ENCODE measurements at regions of chr6 and their contacts with region 1.

Region 1: DNA sequence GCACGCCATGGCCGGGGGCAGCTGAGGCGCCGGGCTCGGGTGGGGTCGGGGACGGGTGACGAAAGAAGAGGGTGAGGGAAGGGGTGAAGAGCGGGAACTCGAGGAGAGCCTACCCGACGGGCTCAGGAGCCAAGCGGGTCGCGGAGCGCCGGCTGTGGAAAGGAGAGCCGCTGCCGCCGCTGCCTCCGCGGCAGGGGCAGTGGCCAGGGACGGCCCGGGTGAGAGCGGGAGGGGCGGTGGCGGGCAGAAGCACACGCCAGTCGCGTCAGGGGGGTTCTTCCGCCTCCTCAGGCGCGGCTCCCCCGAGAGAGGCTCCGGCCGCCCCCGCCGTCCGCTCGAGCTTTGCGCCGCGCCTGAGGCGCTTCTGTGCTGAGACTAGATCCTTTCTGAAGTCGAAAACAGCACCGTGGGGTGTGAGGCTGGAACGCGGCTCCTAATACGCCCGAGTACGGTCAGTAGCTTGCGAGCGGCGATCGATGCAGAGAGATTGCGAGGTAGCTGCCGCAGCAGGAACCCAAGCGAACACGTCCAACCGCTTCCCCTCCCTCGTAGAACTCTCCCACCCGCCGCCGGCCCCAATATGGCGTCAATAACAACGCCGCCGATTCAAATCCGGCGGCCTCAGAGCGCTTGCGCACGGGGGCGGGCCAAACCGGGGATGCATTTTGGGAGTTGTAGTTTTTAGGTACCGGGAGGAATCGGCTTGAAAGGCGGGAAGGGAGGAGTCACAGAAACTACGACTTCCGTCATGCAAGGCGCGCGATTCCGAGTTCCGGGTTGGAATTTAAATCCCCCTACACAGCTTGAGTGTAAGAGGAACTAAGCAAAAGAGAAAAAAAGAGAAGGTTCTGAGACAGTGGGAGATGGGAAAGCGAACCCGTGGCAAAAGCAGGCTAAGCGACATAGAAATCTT is at the start of gene AKIRIN2:
- DNase-seq: peak; percentile 96 to 99 (median 98)
- ATAC-seq: peak; percentile 90
- H3K4me3 ChIP-seq: peak within 1 kb of the TSS; percentile 80
- H3K4me3 Mint-ChIP-seq: peak within 1 kb of the TSS; percentile 92 to 98 (median 96)
- H3K27ac ChIP-seq: peak within 1 kb of the TSS; percentile 93
- H3K27ac Mint-ChIP-seq: peak within 1 kb of the TSS; percentile 89 to 97 (median 94)
- H3K4me1 ChIP-seq: peaks cover 6 to 13% of the 10 kb centered on the region in 2 donors
- H3K4me1 Mint-ChIP-seq: peaks cover 22 to 43% (median 40%) of the 10 kb centered on the region in 7 donors
- H3K27me3 ChIP-seq: no peaks in the 10 kb centered on the region
- H3K27me3 Mint-ChIP-seq: no peaks in the 10 kb centered on the region
- total RNA-seq, gene AKIRIN2: 36.0 to 197 (median 57.4) TPM

Region 2: GRCh38 chr6:87393022-87393622 is 308.8 kb before region 1 on chr6:
- CTCF ChIA-PET with region 1: no interaction called
- POLR2A ChIA-PET with region 1: no interaction called
- intact Hi-C with region 1: loop called in 1 of 2 experiments (anchors 5 kb)
- DNase-seq: peak in 7 of 9 donors; percentile 43 to 63 (median 62)
- ATAC-seq: peak; percentile 96
- H3K4me3 ChIP-seq: no peak overlapping the region
- H3K4me3 Mint-ChIP-seq: no peak overlapping the region
- H3K27ac ChIP-seq: no peak overlapping the region
- H3K27ac Mint-ChIP-seq: no peak overlapping the region
- H3K4me1 ChIP-seq: no peaks in the 10 kb centered on the region
- H3K4me1 Mint-ChIP-seq: peaks cover 0 to 3% (median 0%) of the 10 kb centered on the region in 7 donors
- H3K27me3 ChIP-seq: no peaks in the 10 kb centered on the region
- H3K27me3 Mint-ChIP-seq: no peaks in the 10 kb centered on the region

Region 3: GRCh38 chr6:87645080-87645479 is 56.9 kb before region 1 on chr6:
- CTCF ChIA-PET with region 1: interaction called, 3 read pairs
- POLR2A ChIA-PET with region 1: interaction called, 3 read pairs
- intact Hi-C with region 1: loop called in 1 of 2 experiments (anchors 2 kb)
- DNase-seq: peak in 2 of 9 donors; percentile 12 to 30
- ATAC-seq: peak; percentile 40
- H3K4me3 ChIP-seq: peak overlapping the region; percentile 32
- H3K4me3 Mint-ChIP-seq: peak overlapping the region; percentile 30 to 86 (median 78)
- H3K27ac ChIP-seq: no peak overlapping the region
- H3K27ac Mint-ChIP-seq: peak overlapping the region; percentile 49 to 87 (median 78)
- H3K4me1 ChIP-seq: peaks cover 0 to 8% of the 10 kb centered on the region in 2 donors
- H3K4me1 Mint-ChIP-seq: peaks cover 0 to 25% (median 19%) of the 10 kb centered on the region in 7 donors
- H3K27me3 ChIP-seq: no peaks in the 10 kb centered on the region
- H3K27me3 Mint-ChIP-seq: no peaks in the 10 kb centered on the region

Region 4: DNA sequence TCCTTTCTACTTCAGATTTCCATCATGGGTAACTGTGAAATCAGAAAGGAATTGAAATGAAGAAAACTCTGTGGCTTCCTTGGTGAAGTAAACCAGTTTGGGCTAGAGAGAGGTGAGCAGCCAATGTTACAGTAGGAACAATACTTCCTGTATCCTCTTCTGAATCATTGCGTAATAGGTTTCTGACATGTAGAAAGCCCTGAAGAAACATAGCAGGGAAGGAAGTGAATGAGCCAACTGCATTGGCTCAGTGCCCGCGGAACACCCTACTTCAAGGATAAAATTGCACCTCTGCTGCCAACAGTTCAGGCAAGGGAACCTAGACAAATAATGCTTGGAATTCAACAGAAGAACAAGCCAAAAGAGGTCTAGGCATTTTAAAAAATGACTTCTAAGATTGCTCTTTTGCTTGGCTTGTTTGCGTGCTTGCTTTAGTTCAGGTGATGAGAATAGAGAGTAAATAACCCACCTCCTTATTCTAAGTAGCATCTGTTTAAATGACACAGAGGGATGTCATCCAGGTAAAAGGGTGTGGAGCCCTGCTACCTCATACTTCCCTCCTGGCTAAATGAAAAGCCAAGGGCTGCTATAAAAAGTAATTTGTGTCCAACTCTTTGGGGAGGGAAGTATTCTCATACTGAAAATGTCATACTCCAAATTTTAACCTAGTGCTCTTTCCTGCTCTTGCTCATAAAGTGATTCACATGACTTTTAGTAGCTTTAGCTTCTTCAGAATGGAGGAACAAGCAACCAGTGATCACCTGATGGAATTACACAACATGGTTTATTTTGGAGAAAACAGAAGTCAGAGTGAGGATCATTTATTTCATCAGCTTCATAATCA is 30.1 kb after region 1 on chr6:
- CTCF ChIA-PET with region 1: interaction called, 3 read pairs
- POLR2A ChIA-PET with region 1: no interaction called
- intact Hi-C with region 1: loop called (anchors 1 to 2 kb)
- DNase-seq: peak in 8 of 9 donors; percentile 17 to 61 (median 42)
- ATAC-seq: peak; percentile 82
- H3K4me3 ChIP-seq: no peak overlapping the region
- H3K4me3 Mint-ChIP-seq: peak overlapping the region in 9 of 10 donors; percentile 6 to 64 (median 55)
- H3K27ac ChIP-seq: no peak overlapping the region
- H3K27ac Mint-ChIP-seq: peak overlapping the region; percentile 25 to 73 (median 52)
- H3K4me1 ChIP-seq: peaks cover 0 to 12% of the 10 kb centered on the region in 2 donors
- H3K4me1 Mint-ChIP-seq: peaks cover 4 to 12% (median 12%) of the 10 kb centered on the region in 7 donors
- H3K27me3 ChIP-seq: no peaks in the 10 kb centered on the region
- H3K27me3 Mint-ChIP-seq: peaks cover 0 to 7% (median 0%) of the 10 kb centered on the region in 5 donors

Region 5: GRCh38 chr6:88013015-88013414 is 311.1 kb after region 1 on chr6:
- CTCF ChIA-PET with region 1: no interaction called
- POLR2A ChIA-PET with region 1: no interaction called
- intact Hi-C with region 1: loop called in 1 of 2 experiments (anchors 10 kb)
- DNase-seq: peak in 6 of 9 donors; percentile 8 to 48 (median 38)
- ATAC-seq: peak; percentile 80
- H3K4me3 ChIP-seq: peak overlapping the region; percentile 1
- H3K4me3 Mint-ChIP-seq: peak overlapping the region; percentile 30 to 77 (median 58)
- H3K27ac ChIP-seq: peak overlapping the region; percentile 61
- H3K27ac Mint-ChIP-seq: peak overlapping the region; percentile 11 to 96 (median 91)
- H3K4me1 ChIP-seq: peaks cover 11 to 15% of the 10 kb centered on the region in 2 donors
- H3K4me1 Mint-ChIP-seq: peaks cover 12 to 23% (median 19%) of the 10 kb centered on the region in 7 donors
- H3K27me3 ChIP-seq: no peaks in the 10 kb centered on the region
- H3K27me3 Mint-ChIP-seq: peaks cover 0 to 4% (median 0%) of the 10 kb centered on the region in 5 donors

Region 6: DNA sequence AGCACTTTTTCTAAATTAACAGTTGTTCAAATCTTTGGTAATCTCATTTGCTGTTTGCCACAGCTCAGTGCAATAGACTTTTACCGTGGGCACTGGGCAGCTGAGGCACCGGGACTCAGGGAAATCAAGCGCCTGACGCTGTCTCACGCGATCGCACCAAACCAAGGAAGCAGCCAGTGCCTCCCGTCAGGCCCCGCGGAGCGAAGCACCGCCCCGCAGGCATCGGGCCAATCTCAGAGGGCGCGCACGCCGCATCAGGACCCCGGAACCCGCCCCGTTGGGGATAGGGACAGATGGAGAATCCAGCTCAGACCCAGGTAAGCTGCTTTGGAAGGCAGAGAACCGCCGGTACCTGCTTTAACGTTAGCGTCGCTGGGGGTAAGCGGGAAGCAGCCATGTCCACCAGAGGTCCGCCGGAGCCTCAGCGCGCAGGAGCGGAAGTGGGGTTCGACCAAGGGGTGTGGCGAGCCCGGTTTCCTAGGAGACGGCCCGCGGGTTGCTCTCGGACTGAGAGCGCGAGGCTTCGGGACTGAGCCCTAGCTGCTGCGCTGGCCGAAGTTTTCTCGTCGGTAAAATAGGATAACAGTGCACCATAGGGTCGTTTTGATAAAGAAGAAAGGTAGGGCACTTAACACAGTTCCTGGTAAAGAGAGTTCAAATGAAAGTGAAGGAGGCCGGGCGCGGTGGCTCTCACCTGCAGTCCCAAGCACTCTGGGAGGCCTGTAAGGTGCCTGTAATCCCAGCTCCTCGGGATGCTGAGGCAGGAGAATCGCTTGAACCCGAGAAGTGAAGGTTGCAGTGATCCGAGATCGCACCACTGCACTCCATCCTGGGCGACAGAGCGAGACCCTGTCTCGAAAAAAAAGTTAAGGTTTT is 1936.6 kb after region 1 on chr6 and contains the start of gene LYRM2:
- CTCF ChIA-PET with region 1: no interaction called
- POLR2A ChIA-PET with region 1: no interaction called
- intact Hi-C with region 1: loop called in 1 of 2 experiments (anchors 1 kb)
- DNase-seq: peak; percentile 85 to 93 (median 91)
- ATAC-seq: peak; percentile 97
- H3K4me3 ChIP-seq: peak within 1 kb of the TSS; percentile 99
- H3K4me3 Mint-ChIP-seq: peak within 1 kb of the TSS; percentile 90 to 98 (median 94)
- H3K27ac ChIP-seq: peak within 1 kb of the TSS; percentile 91
- H3K27ac Mint-ChIP-seq: peak within 1 kb of the TSS; percentile 96 to 99 (median 99)
- H3K4me1 ChIP-seq: peaks cover 9 to 15% of the 10 kb centered on the region in 2 donors
- H3K4me1 Mint-ChIP-seq: peaks cover 6 to 45% (median 27%) of the 10 kb centered on the region in 7 donors
- H3K27me3 ChIP-seq: no peaks in the 10 kb centered on the region
- H3K27me3 Mint-ChIP-seq: peaks cover 0 to 3% (median 0%) of the 10 kb centered on the region in 5 donors
- total RNA-seq, gene LYRM2: 18.1 to 40.7 (median 32.0) TPM

Measured in naive thymus-derived CD4-positive, alpha-beta T cell (primary cell).